ENCODE measurements at regions of chr4 and their contacts with region 1.

Region 1: GRCh38 chr4:53476232-53477037 is 99.0 kb downstream of the FIP1L1 start:
- DNase-seq: peak; percentile 95
- H3K4me3 ChIP-seq: no peak overlapping the region
- H3K27ac ChIP-seq: peak overlapping the region; percentile 97
- H3K27me3 ChIP-seq: no peaks in the 10 kb centered on the region
- CTCF ChIP-seq: 0 out of 2 replicates have a peak, but pooled peaks have one; percentile 6

Region 2: GRCh38 chr4:53459548-53459947 is 16.9 kb before region 1 on chr4:
- CTCF ChIA-PET with region 1: no interaction called
- POLR2A ChIA-PET with region 1: interaction called, 10 read pairs
- DNase-seq: no peak
- H3K4me3 ChIP-seq: no peak overlapping the region
- H3K27ac ChIP-seq: no peak overlapping the region
- H3K27me3 ChIP-seq: no peaks in the 10 kb centered on the region
- CTCF ChIP-seq: no peak

Region 3: DNA sequence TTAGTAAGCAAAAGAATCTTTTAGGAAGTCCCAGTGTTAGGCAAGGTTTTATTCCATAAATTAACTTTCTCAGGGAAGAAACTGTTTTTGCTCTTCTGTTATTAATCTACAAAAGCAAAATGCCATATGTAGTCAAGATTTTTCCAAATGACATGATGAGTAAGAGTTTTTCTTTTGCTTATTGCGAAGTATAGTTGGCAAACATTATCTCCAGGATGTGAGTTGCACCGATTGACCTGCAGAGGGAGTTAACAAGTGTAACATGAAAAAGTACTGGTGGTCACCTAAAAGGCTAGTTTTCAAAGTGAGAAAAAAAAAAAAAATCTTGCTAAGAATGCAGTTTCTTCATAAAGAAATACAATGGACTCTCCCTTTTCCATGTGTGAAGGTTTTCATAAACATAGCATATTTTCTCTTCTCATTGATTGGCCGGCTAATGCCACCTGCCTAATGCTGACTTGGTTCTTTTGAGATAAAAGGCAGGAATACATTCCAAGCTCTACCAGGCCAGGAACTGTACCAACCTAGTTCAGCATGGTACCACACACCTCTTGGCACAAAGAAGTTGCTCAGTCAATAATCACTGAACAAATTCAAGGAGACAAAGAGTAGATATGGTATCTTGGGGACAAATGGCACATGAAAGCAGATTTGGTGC is 14.7 kb after region 1 on chr4:
- CTCF ChIA-PET with region 1: interaction called, 22 read pairs
- POLR2A ChIA-PET with region 1: interaction called, 3 read pairs
- DNase-seq: peak; percentile 72
- H3K4me3 ChIP-seq: no peak overlapping the region
- H3K27ac ChIP-seq: no peak overlapping the region
- H3K27me3 ChIP-seq: no peaks in the 10 kb centered on the region
- CTCF ChIP-seq: peak; percentile 83

Measured in AG04450 (cell line).